Activated naive CD4-positive, alpha-beta T cell treated with anti-CD3 and anti-CD28 coated beads for 36 hours (primary cell): ENCODE measurements at regions of chr3 and their contacts with region 1.

Region 1: DNA sequence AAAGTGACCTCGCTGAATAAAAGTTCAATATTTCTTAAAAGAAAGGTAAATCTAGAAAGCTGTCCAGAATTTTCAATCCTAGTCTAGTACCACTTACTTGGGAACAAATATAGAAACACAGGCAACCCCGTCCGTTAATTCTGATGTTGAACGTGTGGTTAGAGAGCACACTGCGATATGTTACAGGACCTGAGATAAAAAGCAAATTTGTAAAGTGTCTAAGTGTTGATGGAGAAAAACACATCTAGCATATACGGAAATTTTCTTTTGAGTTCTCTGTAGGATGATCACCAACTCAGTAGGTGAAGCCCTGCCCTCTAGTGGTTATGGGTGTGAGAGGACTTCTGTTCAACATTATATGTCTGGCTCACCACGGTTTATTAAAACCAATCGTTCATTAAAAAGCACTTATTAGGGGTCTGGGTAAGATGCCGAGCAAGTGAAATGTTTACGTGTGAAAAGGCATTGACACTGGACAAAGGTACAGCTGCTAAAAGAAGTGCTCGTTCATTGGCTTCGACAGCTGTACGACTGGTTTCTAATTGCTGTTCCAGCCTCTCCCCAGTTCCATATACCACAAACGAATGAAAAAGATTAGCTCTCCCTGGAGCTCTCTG is 1.0 kb upstream of the ATP2C1 start:
- DNase-seq: peak; percentile 83
- H3K4me3 Mint-ChIP-seq: peak overlapping the region; percentile 94
- H3K27ac Mint-ChIP-seq: peak overlapping the region; percentile 98
- H3K4me1 Mint-ChIP-seq: peaks cover 30% of the 10 kb centered on the region
- H3K27me3 Mint-ChIP-seq: no peaks in the 10 kb centered on the region

Region 2: GRCh38 chr3:130276203-130276803 is 616.6 kb before region 1 on chr3:
- CTCF ChIA-PET with region 1: no interaction called
- intact Hi-C with region 1: loop called (anchors 1 kb)
- DNase-seq: peak; percentile 18
- H3K4me3 Mint-ChIP-seq: no peak overlapping the region
- H3K27ac Mint-ChIP-seq: no peak overlapping the region
- H3K4me1 Mint-ChIP-seq: no peaks in the 10 kb centered on the region
- H3K27me3 Mint-ChIP-seq: peaks cover 25% of the 10 kb centered on the region

Region 3: DNA sequence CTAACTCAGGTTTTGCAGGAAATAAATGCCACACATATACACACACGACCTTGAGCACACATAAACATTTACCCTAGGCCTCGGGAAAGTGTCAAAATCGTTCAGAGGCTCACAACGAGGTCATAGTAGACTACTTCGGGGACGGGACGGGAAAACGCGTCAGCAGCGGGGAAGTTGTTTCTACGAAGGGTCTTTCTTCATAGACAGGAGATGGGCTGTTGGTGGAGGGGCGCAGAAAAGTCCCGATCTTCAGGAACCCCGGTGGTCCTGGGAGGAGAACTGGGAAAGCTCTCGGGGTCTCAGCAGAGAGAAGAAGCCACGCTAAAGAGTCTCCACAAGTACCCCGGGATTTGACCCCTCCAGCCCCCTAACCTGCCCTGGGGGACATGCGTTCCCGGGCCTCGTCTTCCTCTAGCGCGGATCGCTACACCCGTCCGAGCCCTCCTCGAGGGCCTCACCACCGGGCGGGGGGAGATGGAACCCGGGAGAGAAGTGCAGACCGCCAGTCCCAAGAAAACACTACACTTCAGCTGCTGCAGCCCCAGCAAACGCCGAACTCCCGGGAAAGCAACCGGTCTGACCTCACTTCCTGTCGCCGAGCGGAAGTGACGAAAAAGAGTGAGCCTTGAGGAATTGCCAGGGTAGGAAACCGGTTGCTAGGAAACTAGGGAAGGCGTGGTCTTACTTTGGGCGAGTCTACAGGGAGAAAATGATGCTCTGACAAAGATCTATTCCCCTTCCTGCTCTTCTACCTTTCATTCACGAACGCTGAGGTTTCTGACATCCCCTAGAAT is 146.4 kb before region 1 on chr3 and contains the start of gene PIK3R4:
- CTCF ChIA-PET with region 1: interaction called, 14 read pairs
- intact Hi-C with region 1: loop called (anchors 1 kb)
- DNase-seq: peak; percentile 98
- H3K4me3 Mint-ChIP-seq: peak within 1 kb of the TSS; percentile 81
- H3K27ac Mint-ChIP-seq: peak within 1 kb of the TSS; percentile 84
- H3K4me1 Mint-ChIP-seq: peaks cover 40% of the 10 kb centered on the region
- H3K27me3 Mint-ChIP-seq: no peaks in the 10 kb centered on the region
- total RNA-seq, gene PIK3R4: 25.8 to 28.6 TPM

Region 4: GRCh38 chr3:130850044-130850797 is 42.6 kb before region 1 on chr3:
- CTCF ChIA-PET with region 1: interaction called, 9 read pairs
- intact Hi-C with region 1: loop called (anchors 1 kb)
- DNase-seq: peak; percentile 83
- H3K4me3 Mint-ChIP-seq: peak overlapping the region; percentile 45
- H3K27ac Mint-ChIP-seq: peak overlapping the region; percentile 59
- H3K4me1 Mint-ChIP-seq: peaks cover 27% of the 10 kb centered on the region
- H3K27me3 Mint-ChIP-seq: peaks cover 44% of the 10 kb centered on the region

Region 5: GRCh38 chr3:130948929-130949328 is 56.1 kb after region 1 on chr3:
- CTCF ChIA-PET with region 1: no interaction called
- intact Hi-C with region 1: no loop called
- DNase-seq: no peak
- H3K4me3 Mint-ChIP-seq: no peak overlapping the region
- H3K27ac Mint-ChIP-seq: no peak overlapping the region
- H3K4me1 Mint-ChIP-seq: peaks cover 11% of the 10 kb centered on the region
- H3K27me3 Mint-ChIP-seq: no peaks in the 10 kb centered on the region

Region 6: DNA sequence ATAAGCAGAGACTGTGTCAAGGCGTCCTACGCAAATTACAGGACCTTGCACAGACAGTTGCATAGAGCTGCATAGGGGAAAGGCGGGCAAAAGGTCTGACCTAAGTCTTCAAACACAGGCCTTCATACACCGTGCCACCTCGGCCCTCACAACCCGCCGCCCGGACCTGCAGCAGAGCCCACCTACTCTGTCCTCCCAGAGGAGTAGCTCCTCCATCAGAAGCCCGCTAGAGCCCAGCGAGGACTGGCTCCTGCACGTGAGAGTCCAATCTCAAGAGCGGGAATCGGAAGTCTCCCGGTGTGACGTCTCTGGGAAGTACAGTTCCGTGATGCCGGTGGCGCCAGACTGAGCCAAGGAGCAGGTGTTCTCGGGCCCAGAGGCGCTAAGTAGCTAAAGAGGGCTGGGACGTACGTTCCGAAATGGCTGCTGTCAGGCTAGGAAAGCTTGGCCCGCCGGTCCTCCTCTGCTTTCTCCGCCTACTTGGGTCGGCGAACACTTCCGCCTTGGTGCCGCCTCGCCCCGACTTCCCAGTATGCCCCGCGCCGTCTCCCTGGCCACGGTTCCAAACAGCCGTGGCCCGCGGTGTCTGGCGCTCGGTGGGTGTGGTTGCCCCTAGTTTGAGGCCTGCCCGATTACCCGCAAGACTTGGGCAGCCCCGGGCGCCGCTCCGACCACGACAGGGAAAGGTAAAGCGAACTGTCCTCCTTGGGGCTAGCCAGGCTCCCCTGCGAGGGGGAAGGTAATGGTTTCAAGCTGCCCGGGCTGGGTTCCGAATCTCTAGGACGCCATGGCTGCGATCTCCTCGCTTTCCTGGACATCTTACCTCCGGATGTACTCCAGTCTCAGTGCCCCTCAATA is 133.7 kb after region 1 on chr3 and contains the starts of genes ASTE1 and NEK11:
- CTCF ChIA-PET with region 1: interaction called, 4 read pairs
- intact Hi-C with region 1: loop called (anchors 1 kb)
- DNase-seq: peak; percentile 92
- H3K4me3 Mint-ChIP-seq: peak within 1 kb of the TSS; percentile 92
- H3K27ac Mint-ChIP-seq: peak within 1 kb of the TSS; percentile 94
- H3K4me1 Mint-ChIP-seq: peaks cover 42% of the 10 kb centered on the region
- H3K27me3 Mint-ChIP-seq: no peaks in the 10 kb centered on the region
- total RNA-seq, gene ASTE1: 10.8 to 11.2 TPM
- total RNA-seq, gene NEK11: 1.1 to 1.9 TPM

Region 7: GRCh38 chr3:131502530-131503245 is 609.8 kb after region 1 on chr3 and contains the start of gene MRPL3:
- CTCF ChIA-PET with region 1: no interaction called
- intact Hi-C with region 1: loop called (anchors 2 kb)
- DNase-seq: peak; percentile 90
- H3K4me3 Mint-ChIP-seq: peak within 1 kb of the TSS; percentile 91
- H3K27ac Mint-ChIP-seq: peak within 1 kb of the TSS; percentile 88
- H3K4me1 Mint-ChIP-seq: peaks cover 37% of the 10 kb centered on the region
- H3K27me3 Mint-ChIP-seq: no peaks in the 10 kb centered on the region
- total RNA-seq, gene MRPL3: 151 to 161 TPM